ENCODE measurements at regions of chr2 and their contacts with region 1.

Region 1: DNA sequence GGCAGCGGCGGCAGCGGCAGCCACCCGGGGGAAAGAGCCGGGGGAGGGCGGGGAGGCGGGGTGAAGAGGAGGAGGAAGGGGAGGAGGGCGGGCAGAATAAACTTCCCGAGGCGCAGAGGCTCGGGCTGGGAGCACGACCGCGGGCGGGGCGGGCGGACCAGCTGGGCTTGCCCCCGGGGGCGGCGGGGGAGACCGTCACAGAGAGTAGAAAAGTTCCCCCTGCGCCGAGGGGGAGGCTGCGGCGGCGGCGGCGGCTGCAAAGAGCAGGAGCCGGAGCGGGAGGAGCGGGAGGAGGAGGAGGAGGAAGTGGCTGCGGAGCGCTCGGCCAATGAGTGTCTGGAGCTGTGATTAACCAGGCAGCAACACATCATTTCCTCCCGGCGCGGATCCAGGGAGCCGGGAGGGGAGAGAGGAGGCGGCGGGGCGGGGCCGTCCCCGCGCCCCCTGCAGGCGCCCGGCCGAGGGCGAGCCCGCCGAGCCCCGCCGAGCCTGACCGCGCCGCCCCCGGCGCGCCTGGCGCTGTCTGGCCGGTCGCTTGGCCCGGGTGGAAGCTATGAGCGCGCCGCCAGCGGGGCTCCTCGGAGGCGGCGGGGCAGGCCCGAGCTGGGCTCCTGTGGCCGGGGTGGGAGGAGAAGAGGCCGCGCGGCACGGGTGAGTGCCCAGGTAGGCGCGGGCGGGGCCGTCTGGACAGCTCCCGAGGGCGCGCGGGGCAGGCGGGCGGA is at the start of gene ACVR1:
- DNase-seq: peak; percentile 97 to 98
- H3K4me3 ChIP-seq: peak within 1 kb of the TSS; percentile 20 to 60 (median 56)
- H3K27ac ChIP-seq: peak within 1 kb of the TSS; percentile 92 to 97 (median 97)
- H3K4me1 ChIP-seq: peaks cover 17 to 32% of the 10 kb centered on the region in 2 donors
- H3K27me3 ChIP-seq: no peaks in the 10 kb centered on the region
- CTCF ChIP-seq: peak in 3 of 6 experiments; percentile 52 to 59 (median 55)
- POLR2A ChIP-seq: peak in 1 of 2 donors; percentile 79
- total RNA-seq, gene ACVR1: 42.7 to 55.8 (median 46.3) TPM

Region 2: DNA sequence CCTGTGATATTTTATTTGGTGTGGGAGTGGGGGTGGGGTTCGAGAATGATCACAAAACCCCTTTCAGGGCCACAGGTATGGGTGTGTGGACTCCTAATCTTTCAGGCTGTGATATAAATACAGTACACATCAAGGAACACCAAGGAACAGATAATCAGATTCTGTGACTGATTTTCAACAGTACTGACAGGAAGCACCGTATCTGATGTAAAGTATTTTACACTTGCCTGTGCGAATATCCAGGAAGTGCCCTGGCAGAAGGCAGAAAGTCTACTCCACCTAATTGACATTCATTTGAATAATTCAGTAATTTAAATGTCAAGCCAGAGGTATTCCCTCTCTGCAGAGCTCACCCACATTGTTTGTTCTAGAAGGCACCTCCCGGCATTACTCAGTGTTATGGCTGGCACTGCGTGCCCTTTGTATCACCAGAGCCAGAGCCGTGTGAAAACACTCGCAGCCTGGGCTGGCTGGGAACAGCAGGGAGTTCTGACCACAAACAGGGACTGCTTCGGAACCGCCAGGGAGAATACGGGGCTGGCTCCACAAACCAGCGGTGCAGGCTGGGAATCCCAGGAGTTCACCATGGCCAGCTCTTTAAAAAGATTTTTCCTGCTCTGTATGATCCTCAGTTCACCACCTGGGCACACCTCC is 91.9 kb before region 1 on chr2:
- intact Hi-C with region 1: loop called (anchors 5 kb)
- DNase-seq: peak; percentile 73 to 81
- H3K4me3 ChIP-seq: no peak overlapping the region
- H3K27ac ChIP-seq: peak overlapping the region; percentile 60 to 78 (median 76)
- H3K4me1 ChIP-seq: peaks cover 62 to 73% of the 10 kb centered on the region in 2 donors
- H3K27me3 ChIP-seq: no peaks in the 10 kb centered on the region
- CTCF ChIP-seq: no peak
- POLR2A ChIP-seq: peak in 1 of 2 donors; percentile 53

Region 3: GRCh38 chr2:157932480-157933159 is 56.4 kb after region 1 on chr2:
- intact Hi-C with region 1: no loop called
- DNase-seq: no peak
- H3K4me3 ChIP-seq: no peak overlapping the region
- H3K27ac ChIP-seq: no peak overlapping the region
- H3K4me1 ChIP-seq: no peaks in the 10 kb centered on the region
- H3K27me3 ChIP-seq: no peaks in the 10 kb centered on the region
- CTCF ChIP-seq: no peak
- POLR2A ChIP-seq: no peak

Region 4: GRCh38 chr2:157946919-157947557 is 70.8 kb after region 1 on chr2:
- intact Hi-C with region 1: no loop called
- DNase-seq: no peak
- H3K4me3 ChIP-seq: no peak overlapping the region
- H3K27ac ChIP-seq: no peak overlapping the region
- H3K4me1 ChIP-seq: peaks cover 0 to 1% of the 10 kb centered on the region in 2 donors
- H3K27me3 ChIP-seq: no peaks in the 10 kb centered on the region
- CTCF ChIP-seq: no peak
- POLR2A ChIP-seq: no peak

Region 5: DNA sequence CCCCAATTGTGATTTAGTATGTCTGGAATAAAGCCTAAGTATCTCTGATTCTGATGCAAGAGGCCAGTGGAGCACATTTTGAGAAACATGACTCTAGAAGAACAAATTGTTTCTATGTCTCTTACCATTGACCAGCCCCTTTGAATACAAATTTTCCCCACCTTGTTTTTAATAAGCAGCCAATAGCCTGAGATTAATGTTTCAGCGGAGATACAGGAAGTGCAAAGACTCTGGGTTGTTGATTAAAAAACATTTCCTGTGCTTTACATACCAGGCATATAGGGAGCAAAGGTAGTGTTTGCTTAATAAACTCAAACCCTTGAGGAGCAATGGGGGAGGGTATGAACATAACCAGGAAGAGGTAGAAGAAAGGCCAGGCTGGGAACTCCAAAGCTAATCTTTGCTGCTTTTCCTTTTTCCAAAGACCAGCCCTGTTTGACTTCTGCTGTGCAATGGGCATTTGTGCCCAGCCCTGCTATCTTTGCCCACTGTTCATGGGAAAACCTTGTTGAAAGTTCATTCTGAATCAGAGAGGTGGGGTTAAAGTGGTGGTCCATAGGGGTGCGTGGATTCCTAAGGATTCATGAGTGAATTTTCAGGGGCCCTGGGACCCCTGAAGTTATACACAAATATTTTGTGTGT is 254.7 kb after region 1 on chr2:
- intact Hi-C with region 1: no loop called
- DNase-seq: no peak
- H3K4me3 ChIP-seq: no peak overlapping the region
- H3K27ac ChIP-seq: peak overlapping the region in 1 of 3 donors; percentile 56
- H3K4me1 ChIP-seq: peaks cover 7% of the 10 kb centered on the region in 2 donors
- H3K27me3 ChIP-seq: no peaks in the 10 kb centered on the region
- CTCF ChIP-seq: no peak
- POLR2A ChIP-seq: no peak

Measured in thyroid gland (tissue), 4 donors.